ENCODE measurements at regions of chr10 and their contacts with region 1.

Region 1: DNA sequence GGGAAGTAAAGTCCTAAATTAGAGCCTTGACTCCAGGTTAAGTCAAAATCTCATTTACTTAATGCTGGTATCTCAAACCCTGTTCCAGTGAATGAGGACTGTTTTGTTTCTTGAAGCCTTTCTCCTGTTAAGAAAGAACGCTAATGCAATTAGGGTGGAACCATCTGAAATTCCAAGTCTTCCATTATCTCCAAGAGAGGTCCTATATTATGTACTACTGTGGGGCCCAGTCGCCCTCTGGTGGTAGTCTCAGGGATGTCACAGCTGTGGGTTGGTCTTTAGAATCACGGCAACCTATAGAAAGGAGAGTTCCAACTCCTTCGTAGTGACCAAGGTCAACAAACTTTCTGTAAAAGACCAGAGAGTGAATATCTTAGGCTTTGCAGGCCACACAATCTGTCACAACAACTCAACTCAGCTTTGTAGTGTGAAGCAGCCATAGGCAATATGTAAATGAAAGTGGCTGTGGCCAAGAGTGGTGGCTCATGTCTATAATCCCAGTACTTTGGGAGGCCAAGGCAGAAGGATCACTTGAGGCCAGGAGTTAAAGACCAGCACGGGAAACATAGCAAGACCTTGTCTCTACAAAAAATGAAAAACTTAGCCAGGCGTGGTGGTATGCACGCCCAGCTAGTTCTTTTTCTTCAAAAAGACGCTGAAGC is 9.3 kb downstream of the RPP38 start:
- DNase-seq: peak; percentile 48
- H3K4me3 Mint-ChIP-seq: no peak overlapping the region
- H3K27ac Mint-ChIP-seq: peak overlapping the region; percentile 28
- H3K4me1 Mint-ChIP-seq: peaks cover 6% of the 10 kb centered on the region
- H3K27me3 Mint-ChIP-seq: no peaks in the 10 kb centered on the region

Region 2: DNA sequence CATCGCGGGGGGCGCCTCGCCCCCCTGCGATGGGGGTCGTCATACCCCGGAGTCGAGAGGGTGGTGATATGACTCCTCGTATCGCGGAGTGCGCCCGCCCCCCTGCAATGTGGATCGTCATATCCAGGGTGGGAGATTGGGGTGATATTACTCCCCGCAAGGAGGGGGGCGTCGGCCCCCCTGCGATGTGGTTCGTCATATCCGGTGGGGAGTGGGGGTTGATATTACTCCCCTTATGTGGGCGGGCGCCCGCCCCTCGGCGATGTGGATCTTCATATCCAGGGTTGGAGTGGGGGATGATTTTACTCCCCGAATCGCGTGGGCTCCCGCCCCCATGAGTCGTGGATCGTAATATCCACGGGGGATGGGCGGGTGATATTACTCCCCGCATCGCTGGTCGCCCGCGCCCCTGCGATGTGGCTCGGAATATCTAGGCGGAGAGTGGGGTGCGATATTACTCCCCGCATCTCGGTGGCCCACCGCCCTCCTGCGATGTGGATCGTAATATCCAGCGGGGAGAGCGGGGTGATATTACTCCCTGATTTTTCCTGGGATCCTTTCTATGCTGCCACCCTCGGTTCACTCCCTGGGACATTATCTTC is 110.4 kb before region 1 on chr10:
- intact Hi-C with region 1: loop called (anchors 1 kb)
- DNase-seq: no peak
- H3K4me3 Mint-ChIP-seq: no peak overlapping the region
- H3K27ac Mint-ChIP-seq: no peak overlapping the region
- H3K4me1 Mint-ChIP-seq: peaks cover 7% of the 10 kb centered on the region
- H3K27me3 Mint-ChIP-seq: peaks cover 2% of the 10 kb centered on the region

Region 3: GRCh38 chr10:15046626-15047025 is 59.9 kb before region 1 on chr10:
- intact Hi-C with region 1: no loop called
- DNase-seq: no peak
- H3K4me3 Mint-ChIP-seq: no peak overlapping the region
- H3K27ac Mint-ChIP-seq: no peak overlapping the region
- H3K4me1 Mint-ChIP-seq: peaks cover 11% of the 10 kb centered on the region
- H3K27me3 Mint-ChIP-seq: no peaks in the 10 kb centered on the region